SK-N-SH (cell line): ENCODE measurements at regions of chr1 and their contacts with region 1.

Region 1: GRCh38 chr1:201309426-201309825 is 26.1 kb downstream of the PKP1 start:
- DNase-seq: peak; percentile 90
- H3K4me3 ChIP-seq: no peak overlapping the region
- H3K27ac ChIP-seq: peak overlapping the region; percentile 70 to 89
- H3K4me1 ChIP-seq: peaks cover 41 to 46% of the 10 kb centered on the region in 2 experiments; a peak in 3 of 4 replicates
- H3K27me3 ChIP-seq: no peaks in the 10 kb centered on the region
- CTCF ChIP-seq: peak; percentile 52
- EP300 ChIP-seq: peak in 1 of 2 experiments; percentile 93; a peak in 2 of 4 replicates
- RAD21 ChIP-seq: peak; percentile 85

Region 2: DNA sequence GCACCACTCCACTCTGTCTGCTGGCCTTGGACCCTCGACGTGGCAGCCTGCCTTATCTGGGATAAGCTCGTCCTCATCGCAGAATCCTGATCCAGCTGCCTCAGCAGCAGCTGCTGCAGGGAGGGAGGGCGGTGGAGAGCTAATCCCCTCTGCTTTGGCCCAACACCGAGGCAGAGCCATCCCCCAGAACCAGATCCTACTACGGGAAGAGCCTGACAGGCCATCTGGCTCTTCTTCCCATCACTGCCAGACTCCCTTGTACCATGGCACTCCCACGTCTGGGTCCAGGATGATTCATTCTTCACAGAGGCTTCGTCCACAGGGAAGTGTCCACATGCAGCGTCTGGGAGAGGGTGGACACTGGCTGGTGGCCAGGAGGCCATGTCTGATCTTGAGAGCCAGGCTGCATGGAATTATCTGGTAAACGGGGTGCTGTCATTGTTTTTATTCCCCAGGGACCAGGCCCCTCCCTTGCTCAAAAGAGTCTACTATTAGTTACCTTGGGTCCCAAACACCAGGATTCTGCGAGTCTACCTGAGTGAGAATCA is 40.7 kb before region 1 on chr1:
- CTCF ChIA-PET with region 1: interaction called, 19 read pairs
- POLR2A ChIA-PET with region 1: no interaction called
- DNase-seq: peak; percentile 89
- H3K4me3 ChIP-seq: no peak overlapping the region; a peak in 1 of 4 replicates
- H3K27ac ChIP-seq: peak overlapping the region; percentile 93 to 97
- H3K4me1 ChIP-seq: peaks cover 39 to 42% of the 10 kb centered on the region in 2 experiments
- H3K27me3 ChIP-seq: no peaks in the 10 kb centered on the region
- CTCF ChIP-seq: no peak
- EP300 ChIP-seq: peak in 1 of 2 experiments; percentile 86; a peak in 3 of 4 replicates
- RAD21 ChIP-seq: peak; percentile 25; the same call in 1 of the 2 replicates

Region 3: DNA sequence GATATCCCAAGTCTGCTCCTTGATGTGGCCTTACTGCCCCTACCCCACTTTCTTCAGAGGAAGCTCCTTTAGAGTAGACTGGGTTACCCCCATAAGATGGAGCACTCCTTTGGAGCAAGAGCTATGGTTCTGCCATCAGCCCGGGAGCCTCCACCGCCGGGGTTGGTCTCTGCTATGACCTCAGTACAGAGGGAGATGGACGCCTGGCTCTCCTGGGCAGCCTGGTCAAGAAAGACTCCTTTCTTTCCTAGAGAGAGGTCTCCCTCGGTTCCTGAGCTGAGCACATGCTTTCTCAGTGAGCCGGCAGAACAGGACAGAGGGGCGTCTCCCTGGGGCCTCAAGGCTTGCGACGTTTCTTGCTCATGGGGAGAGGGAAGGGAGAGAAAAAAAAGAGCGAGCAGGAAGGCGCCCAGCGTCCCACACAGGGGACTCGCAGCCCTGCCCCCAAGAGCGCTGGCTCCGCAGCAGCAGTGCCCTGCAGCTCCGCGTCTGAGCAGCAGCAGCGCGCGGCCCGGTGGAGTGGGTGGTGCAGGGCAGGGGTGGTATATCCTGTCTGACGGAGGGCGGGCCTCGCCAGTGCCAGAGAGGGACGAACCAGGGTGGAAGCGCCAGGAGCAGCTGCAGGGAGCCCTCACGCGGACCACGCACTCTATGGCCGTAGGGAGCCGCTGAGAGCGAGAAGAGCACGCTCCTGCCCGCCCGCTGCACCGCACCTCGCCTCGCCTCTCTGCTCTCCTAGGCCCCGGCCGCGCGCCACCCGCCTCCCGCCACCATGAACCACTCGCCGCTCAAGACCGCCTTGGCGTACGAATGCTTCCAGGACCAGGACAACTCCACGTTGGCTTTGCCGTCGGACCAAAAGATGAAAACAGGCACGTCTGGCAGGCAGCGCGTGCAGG is 26.2 kb before region 1 on chr1 and contains the start of gene PKP1:
- CTCF ChIA-PET with region 1: interaction called, 11 read pairs
- POLR2A ChIA-PET with region 1: no interaction called
- DNase-seq: no peak
- H3K4me3 ChIP-seq: no peak within 1 kb of the TSS
- H3K27ac ChIP-seq: no peak within 1 kb of the TSS
- H3K4me1 ChIP-seq: peaks cover 0 to 17% of the 10 kb centered on the region in 2 experiments; a peak in 2 of 4 replicates
- H3K27me3 ChIP-seq: peaks cover 5% of the 10 kb centered on the region; the same call in 1 of the 2 replicates
- CTCF ChIP-seq: no peak
- EP300 ChIP-seq: no peak
- RAD21 ChIP-seq: no peak
- polyA plus RNA-seq, gene PKP1: not detected in 2 replicates

Region 4: DNA sequence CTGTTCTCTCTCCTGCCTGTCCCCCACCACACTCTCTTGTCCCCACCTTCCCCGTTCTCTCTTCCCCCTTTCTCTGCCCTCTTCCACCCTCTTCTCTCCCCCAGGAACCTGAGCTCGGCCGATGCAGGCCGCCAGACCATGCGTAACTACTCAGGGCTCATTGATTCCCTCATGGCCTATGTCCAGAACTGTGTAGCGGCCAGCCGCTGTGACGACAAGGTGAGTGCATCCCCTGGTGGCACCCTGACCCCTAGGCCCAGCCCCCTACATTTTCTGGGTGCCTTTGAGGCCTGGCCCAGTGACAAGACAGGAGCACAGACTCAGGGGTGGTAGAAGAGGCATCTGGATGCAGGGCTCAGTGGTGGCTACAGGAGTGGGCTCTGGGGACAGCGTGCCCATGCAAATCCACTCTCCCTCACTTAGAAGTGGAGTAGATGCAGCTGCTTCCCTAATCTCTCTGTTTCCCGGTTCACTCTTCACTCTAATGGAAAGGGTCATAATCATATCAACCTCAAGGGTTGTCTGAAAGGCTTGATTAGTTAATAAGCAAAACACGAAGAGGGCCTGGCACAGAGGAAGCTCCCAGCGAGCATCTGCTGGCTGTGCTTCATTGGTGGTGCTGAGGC is 10.8 kb after region 1 on chr1:
- CTCF ChIA-PET with region 1: interaction called, 14 read pairs
- POLR2A ChIA-PET with region 1: no interaction called
- DNase-seq: peak; percentile 77
- H3K4me3 ChIP-seq: no peak overlapping the region
- H3K27ac ChIP-seq: peak overlapping the region in 1 of 2 experiments; percentile 47; a peak in 2 of 4 replicates
- H3K4me1 ChIP-seq: peaks cover 0 to 30% of the 10 kb centered on the region in 2 experiments; a peak in 1 of 4 replicates
- H3K27me3 ChIP-seq: peaks cover 7% of the 10 kb centered on the region; the same call in 1 of the 2 replicates
- CTCF ChIP-seq: no peak
- EP300 ChIP-seq: no peak
- RAD21 ChIP-seq: 0 out of 2 replicates have a peak, but pooled peaks have one; percentile 1

Region 5: DNA sequence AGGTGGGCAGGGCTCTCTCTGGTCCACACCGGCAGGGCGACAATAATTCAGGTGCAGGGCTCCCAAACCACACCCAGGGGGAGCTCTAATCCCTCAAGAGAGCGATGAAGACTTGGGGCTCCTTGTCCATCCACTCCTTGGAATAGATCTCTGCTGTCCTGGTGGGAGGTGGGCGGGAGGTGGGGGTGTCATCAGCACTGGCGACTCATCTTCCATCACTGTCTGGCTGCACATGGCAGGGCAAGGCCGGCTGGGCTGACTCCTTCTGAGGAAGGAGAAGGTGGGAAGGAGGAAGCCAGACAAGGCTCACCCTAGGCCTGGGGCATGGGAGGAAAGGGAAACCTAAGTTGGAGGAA is 38.8 kb after region 1 on chr1:
- CTCF ChIA-PET with region 1: interaction called, 126 read pairs
- POLR2A ChIA-PET with region 1: no interaction called
- DNase-seq: peak; percentile 76
- H3K4me3 ChIP-seq: no peak overlapping the region
- H3K27ac ChIP-seq: no peak overlapping the region
- H3K4me1 ChIP-seq: peaks cover 0 to 7% of the 10 kb centered on the region in 2 experiments; a peak in 2 of 4 replicates
- H3K27me3 ChIP-seq: no peaks in the 10 kb centered on the region; the same call in 1 of the 2 replicates
- CTCF ChIP-seq: peak; percentile 65
- EP300 ChIP-seq: no peak
- RAD21 ChIP-seq: peak; percentile 58

Region 6: DNA sequence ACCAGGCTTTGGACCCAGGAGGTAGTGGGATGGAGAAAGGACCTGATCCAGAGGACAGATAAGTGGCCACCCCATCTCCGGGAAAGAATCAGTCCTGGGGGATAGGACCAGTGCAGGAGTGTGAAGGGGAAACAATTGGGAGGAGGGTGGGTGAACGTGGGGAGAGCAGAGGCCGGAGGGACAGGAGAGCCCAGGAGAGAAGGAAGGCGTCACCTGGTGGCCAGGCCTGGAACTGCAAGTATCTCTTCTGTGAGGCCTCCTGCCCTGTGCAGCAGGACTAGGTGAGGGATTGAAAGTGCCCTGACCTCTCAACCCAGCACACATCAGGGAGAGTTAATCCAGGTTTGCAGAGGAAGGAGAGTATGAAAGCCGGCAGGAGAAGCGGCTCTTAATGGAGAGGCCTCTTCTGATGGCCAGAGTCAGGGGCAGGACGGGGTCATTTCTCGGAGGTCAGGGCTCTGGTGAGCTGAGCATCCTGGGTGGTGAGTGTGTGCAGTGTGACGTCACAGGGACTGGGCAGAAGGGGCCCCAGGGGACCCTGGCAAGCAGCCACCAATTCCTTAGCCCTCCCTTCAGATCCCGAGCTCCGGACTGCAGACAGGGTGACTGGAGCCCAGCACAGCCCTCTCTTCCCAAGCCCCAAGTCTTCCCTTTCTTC is 98.9 kb after region 1 on chr1:
- CTCF ChIA-PET with region 1: interaction called, 19 read pairs
- POLR2A ChIA-PET with region 1: no interaction called
- DNase-seq: peak; percentile 91
- H3K4me3 ChIP-seq: no peak overlapping the region; a peak in 1 of 4 replicates
- H3K27ac ChIP-seq: no peak overlapping the region
- H3K4me1 ChIP-seq: peaks cover 0 to 8% of the 10 kb centered on the region in 2 experiments; a peak in 1 of 4 replicates
- H3K27me3 ChIP-seq: peaks cover 31% of the 10 kb centered on the region; the same call in 1 of the 2 replicates
- CTCF ChIP-seq: peak; percentile 95
- EP300 ChIP-seq: no peak
- RAD21 ChIP-seq: peak; percentile 78

Region 7: DNA sequence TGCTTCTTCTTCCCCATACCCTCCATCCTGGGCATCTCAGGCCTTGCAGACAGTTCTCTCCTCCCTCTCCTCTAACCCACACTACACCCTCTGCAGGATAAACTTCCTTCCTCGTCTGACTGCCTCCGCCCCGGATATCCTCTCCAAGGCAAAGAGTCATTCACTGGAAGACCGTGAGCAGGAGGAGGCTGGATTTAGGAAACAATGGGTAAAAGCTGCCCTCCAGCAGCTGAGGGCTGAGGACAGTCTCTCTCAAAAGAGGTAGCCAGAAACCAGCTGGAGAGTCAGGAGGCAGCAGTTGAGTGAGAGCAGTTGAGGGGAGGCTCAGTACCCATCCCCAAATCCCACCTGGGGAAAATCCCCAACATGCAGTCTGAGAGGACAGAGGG is 196.1 kb after region 1 on chr1:
- CTCF ChIA-PET with region 1: no interaction called
- POLR2A ChIA-PET with region 1: no interaction called
- DNase-seq: no peak
- H3K4me3 ChIP-seq: peak overlapping the region; percentile 57 to 65; a peak in 3 of 4 replicates
- H3K27ac ChIP-seq: peak overlapping the region; percentile 2 to 93; a peak in 2 of 4 replicates
- H3K4me1 ChIP-seq: peaks cover 30 to 33% of the 10 kb centered on the region in 2 experiments; a peak in 3 of 4 replicates
- H3K27me3 ChIP-seq: no peaks in the 10 kb centered on the region
- CTCF ChIP-seq: no peak
- EP300 ChIP-seq: no peak
- RAD21 ChIP-seq: no peak